ENCODE measurements at regions of chr9 and their contacts with region 1.

Region 1: DNA sequence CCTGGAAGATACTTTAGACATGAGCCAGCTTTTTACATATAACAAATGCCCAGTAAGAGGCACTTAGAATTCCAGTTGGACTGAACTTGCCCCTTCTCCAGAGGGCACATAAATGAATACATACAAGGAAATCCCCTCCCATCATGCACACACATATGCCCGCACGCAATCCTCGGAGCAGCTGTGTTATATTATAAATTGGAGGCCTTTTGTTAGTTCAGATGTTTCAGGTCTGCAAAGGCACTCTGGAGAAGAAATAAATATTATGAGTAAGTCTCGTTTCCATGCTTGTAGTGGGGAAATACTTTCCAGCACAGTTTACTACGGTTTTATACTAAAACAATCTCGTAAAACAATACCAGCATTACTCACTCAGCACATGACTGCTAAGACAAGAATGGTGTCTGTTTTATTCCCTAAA is 17.6 kb upstream of the MUSK start:
- DNase-seq: peak in 1 of 2 donors; percentile 77
- H3K4me3 ChIP-seq: no peak overlapping the region
- H3K27ac ChIP-seq: peak overlapping the region; percentile 64 to 65
- H3K4me1 ChIP-seq: peaks cover 0 to 13% of the 10 kb centered on the region in 2 donors
- H3K27me3 ChIP-seq: no peaks in the 10 kb centered on the region
- CTCF ChIP-seq: no peak

Region 2: DNA sequence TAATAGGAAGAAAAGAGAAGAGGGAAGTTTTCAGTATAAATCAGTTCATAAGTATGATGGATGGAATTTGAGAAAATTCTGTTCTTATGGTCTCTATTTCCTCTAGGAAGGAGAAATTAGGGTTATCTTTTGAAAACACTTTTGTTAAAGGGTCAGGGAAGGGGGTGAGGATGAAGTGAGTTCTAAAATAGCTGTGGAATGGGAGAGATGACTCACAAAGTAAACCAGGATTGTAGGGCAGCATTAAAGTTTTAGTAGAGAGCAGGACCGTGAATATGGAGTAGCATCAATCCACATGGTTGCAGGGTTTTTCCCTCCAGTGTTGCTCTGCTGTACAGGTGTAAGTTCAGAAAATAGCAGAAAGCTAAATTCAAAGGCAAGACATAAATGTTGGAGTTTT is 50.0 kb after region 1 on chr9:
- intact Hi-C with region 1: loop called (anchors 2 kb)
- DNase-seq: no peak
- H3K4me3 ChIP-seq: no peak overlapping the region
- H3K27ac ChIP-seq: peak overlapping the region; percentile 17 to 47
- H3K4me1 ChIP-seq: no peaks in the 10 kb centered on the region
- H3K27me3 ChIP-seq: no peaks in the 10 kb centered on the region
- CTCF ChIP-seq: no peak

Region 3: GRCh38 chr9:110728058-110728457 is 77.1 kb after region 1 on chr9:
- intact Hi-C with region 1: no loop called
- DNase-seq: no peak
- H3K4me3 ChIP-seq: no peak overlapping the region
- H3K27ac ChIP-seq: no peak overlapping the region
- H3K4me1 ChIP-seq: no peaks in the 10 kb centered on the region
- H3K27me3 ChIP-seq: no peaks in the 10 kb centered on the region
- CTCF ChIP-seq: no peak

Region 4: GRCh38 chr9:110895147-110895905 is 244.3 kb after region 1 on chr9:
- intact Hi-C with region 1: loop called (anchors 2 kb)
- DNase-seq: no peak
- H3K4me3 ChIP-seq: no peak overlapping the region
- H3K27ac ChIP-seq: peak overlapping the region; percentile 81 to 87
- H3K4me1 ChIP-seq: peaks cover 11 to 51% of the 10 kb centered on the region in 2 donors
- H3K27me3 ChIP-seq: no peaks in the 10 kb centered on the region
- CTCF ChIP-seq: no peak

Region 5: GRCh38 chr9:112074250-112075008 is 1423.4 kb after region 1 on chr9:
- intact Hi-C with region 1: no loop called
- DNase-seq: peak in 1 of 2 donors; percentile 82
- H3K4me3 ChIP-seq: peak overlapping the region in 1 of 2 donors; percentile 21
- H3K27ac ChIP-seq: peak overlapping the region; percentile 54 to 65
- H3K4me1 ChIP-seq: no peaks in the 10 kb centered on the region
- H3K27me3 ChIP-seq: no peaks in the 10 kb centered on the region
- CTCF ChIP-seq: peak; percentile 89 to 94 (median 91)